ENCODE measurements at regions of chr6 and their contacts with region 1.

Region 1: DNA sequence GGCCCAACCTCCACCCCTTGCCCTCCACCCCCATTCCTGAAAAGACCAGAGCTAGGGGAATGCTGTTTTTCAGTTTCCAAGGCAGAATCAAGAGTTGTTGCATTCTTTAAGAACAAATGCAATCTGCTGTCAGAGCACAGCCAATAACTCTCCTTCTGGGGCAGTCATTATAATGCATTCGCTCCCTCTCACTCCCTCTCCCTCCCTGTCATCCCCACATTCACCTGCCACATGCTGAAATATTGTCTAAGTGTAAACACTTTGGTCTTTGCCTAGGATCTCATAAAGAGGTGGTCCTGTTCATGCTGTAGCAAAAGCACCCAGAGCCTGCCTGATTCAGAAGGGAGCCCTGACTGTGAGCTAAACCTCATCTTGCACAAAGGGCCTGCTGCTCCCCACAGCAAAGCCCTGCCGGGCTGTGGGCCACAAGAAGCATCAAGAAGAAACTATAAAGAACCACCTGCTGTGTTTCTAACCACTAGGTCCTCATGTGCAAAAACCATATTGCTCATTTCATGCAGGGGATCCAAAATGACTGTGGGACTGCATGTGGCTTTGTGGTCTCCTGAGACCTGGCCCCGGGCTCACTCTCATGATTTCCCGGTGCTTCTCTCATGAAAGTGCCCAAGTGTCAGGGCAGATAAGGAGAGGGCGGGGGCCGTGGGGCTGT is 85.6 kb downstream of the GPR6 start:
- DNase-seq: no peak
- H3K4me3 ChIP-seq: no peak overlapping the region
- H3K27ac ChIP-seq: no peak overlapping the region
- H3K4me1 ChIP-seq: peaks cover 34% of the 10 kb centered on the region
- CTCF ChIP-seq: no peak

Region 2: DNA sequence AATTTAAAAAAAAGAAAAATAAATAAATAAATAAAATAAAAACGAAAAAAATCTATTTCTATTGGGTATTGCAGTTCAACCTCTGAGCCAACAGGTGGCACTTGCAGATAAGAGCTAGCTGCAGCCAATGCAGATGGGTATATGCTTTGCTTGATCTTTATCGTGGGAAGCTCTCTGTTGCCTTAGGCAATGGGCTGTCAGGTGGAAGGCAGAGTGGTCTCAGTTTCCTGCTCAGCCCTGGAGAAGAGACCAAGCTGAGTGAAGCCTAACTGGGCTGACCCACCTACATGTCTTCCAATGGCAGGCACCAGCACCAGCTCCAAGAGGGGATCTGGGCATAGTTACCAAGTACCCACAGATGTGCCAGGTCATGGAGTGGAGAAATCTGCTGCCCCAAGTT is 467.7 kb before region 1 on chr6:
- CTCF ChIA-PET with region 1: no interaction called
- POLR2A ChIA-PET with region 1: no interaction called
- intact Hi-C with region 1: no loop called
- DNase-seq: peak; percentile 12
- H3K4me3 ChIP-seq: no peak overlapping the region
- H3K27ac ChIP-seq: no peak overlapping the region
- H3K4me1 ChIP-seq: no peaks in the 10 kb centered on the region
- CTCF ChIP-seq: peak; percentile 51

Region 3: GRCh38 chr6:110013386-110013785 is 50.3 kb before region 1 on chr6:
- CTCF ChIA-PET with region 1: no interaction called
- POLR2A ChIA-PET with region 1: no interaction called
- intact Hi-C with region 1: no loop called
- DNase-seq: no peak
- H3K4me3 ChIP-seq: no peak overlapping the region
- H3K27ac ChIP-seq: no peak overlapping the region
- H3K4me1 ChIP-seq: no peaks in the 10 kb centered on the region
- CTCF ChIP-seq: no peak

Region 4: DNA sequence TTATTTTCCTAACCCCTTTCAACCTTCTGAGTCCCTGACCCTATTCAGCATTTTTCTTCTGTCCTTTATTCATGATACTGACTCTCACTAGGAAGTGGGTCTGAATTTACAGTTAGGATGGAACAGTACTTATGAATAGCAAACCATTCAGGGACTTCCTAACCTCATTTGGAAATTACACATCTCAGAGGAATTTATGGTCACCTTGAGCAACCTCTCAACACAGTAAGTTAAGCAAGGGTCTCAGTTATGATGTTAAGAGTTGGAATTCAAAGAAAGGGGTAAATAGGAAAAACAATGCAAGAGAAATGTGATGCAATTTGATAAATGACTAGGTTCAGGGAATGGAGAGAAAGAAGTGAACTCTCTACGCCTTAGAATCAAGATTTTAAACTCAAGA is 11.7 kb after region 1 on chr6:
- CTCF ChIA-PET with region 1: interaction called, 5 read pairs
- POLR2A ChIA-PET with region 1: interaction called, 39 read pairs
- intact Hi-C with region 1: no loop called
- DNase-seq: no peak
- H3K4me3 ChIP-seq: no peak overlapping the region
- H3K27ac ChIP-seq: no peak overlapping the region
- H3K4me1 ChIP-seq: peaks cover 9% of the 10 kb centered on the region
- CTCF ChIP-seq: no peak

Region 5: DNA sequence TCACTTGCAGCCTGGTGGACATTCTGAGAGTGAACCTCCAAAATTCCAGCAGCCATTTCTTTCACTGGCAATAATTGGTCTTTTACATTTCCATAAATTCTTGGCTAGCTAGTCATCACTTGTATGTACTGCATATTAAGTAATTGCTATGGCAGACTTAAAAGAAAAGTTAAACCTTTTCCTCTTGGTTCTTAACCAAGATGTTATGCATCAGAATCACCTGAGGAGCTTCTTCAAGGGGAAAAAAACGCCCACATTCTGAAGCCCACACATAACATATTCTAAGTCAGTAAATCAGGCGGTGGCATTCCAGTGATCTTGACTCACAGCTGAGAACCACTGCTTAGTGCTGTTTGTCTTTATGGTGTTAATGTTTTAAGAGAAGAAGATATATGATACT is 153.5 kb after region 1 on chr6:
- CTCF ChIA-PET with region 1: no interaction called
- POLR2A ChIA-PET with region 1: no interaction called
- intact Hi-C with region 1: no loop called
- DNase-seq: no peak
- H3K4me3 ChIP-seq: no peak overlapping the region
- H3K27ac ChIP-seq: no peak overlapping the region
- H3K4me1 ChIP-seq: peaks cover 9% of the 10 kb centered on the region
- CTCF ChIP-seq: no peak